ENCODE measurements at regions of chr18 and their contacts with region 1.

Region 1: GRCh38 chr18:45690975-45691815 is 32.8 kb upstream of the SLC14A1 start:
- DNase-seq: peak; percentile 80
- H3K4me3 ChIP-seq: no peak overlapping the region
- H3K27ac ChIP-seq: no peak overlapping the region
- H3K4me1 ChIP-seq: peaks cover 0 to 6% (median 0%) of the 10 kb centered on the region in 4 donors
- H3K27me3 ChIP-seq: no peaks in the 10 kb centered on the region
- CTCF ChIP-seq: peak; percentile 45 to 76 (median 52)
- EP300 ChIP-seq: no peak
- POLR2A ChIP-seq: no peak

Region 2: GRCh38 chr18:45503990-45504389 is 187.2 kb before region 1 on chr18:
- intact Hi-C with region 1: no loop called
- DNase-seq: no peak
- H3K4me3 ChIP-seq: no peak overlapping the region
- H3K27ac ChIP-seq: no peak overlapping the region
- H3K4me1 ChIP-seq: no peaks in the 10 kb centered on the region
- H3K27me3 ChIP-seq: no peaks in the 10 kb centered on the region
- CTCF ChIP-seq: no peak
- EP300 ChIP-seq: no peak
- POLR2A ChIP-seq: no peak

Region 3: GRCh38 chr18:45879681-45880655 is 188.8 kb after region 1 on chr18:
- intact Hi-C with region 1: loop called (anchors 1 kb)
- DNase-seq: peak; percentile 86
- H3K4me3 ChIP-seq: no peak overlapping the region
- H3K27ac ChIP-seq: no peak overlapping the region
- H3K4me1 ChIP-seq: peaks cover 0 to 7% (median 2%) of the 10 kb centered on the region in 4 donors
- H3K27me3 ChIP-seq: no peaks in the 10 kb centered on the region
- CTCF ChIP-seq: peak; percentile 74 to 99 (median 86)
- EP300 ChIP-seq: no peak
- POLR2A ChIP-seq: no peak

Region 4: GRCh38 chr18:45974088-45974536 is 282.9 kb after region 1 on chr18:
- intact Hi-C with region 1: loop called (anchors 2 kb)
- DNase-seq: no peak
- H3K4me3 ChIP-seq: no peak overlapping the region
- H3K27ac ChIP-seq: no peak overlapping the region
- H3K4me1 ChIP-seq: no peaks in the 10 kb centered on the region
- H3K27me3 ChIP-seq: no peaks in the 10 kb centered on the region
- CTCF ChIP-seq: peak in 2 of 4 experiments; percentile 58 to 62
- EP300 ChIP-seq: no peak
- POLR2A ChIP-seq: no peak

Measured in sigmoid colon (tissue), 7 donors.